Panc1 (cell line): ENCODE measurements at regions of chr11 and their contacts with region 1.

Region 1: GRCh38 chr11:118610804-118611795 is 3.7 kb downstream of the PHLDB1 start:
- DNase-seq: no peak
- ATAC-seq: peak; percentile 76
- H3K4me3 ChIP-seq: peak overlapping the region; percentile 30 to 50
- H3K27ac ChIP-seq: peak overlapping the region; percentile 35; the same call in 1 of the 2 replicates
- H3K4me1 ChIP-seq: peaks cover 11% of the 10 kb centered on the region; the same call in 1 of the 2 replicates
- H3K27me3 ChIP-seq: no peaks in the 10 kb centered on the region
- CTCF ChIP-seq: peak; percentile 99

Region 2: GRCh38 chr11:118592616-118593367 is 18.3 kb before region 1 on chr11:
- CTCF ChIA-PET with region 1: interaction called, 14 read pairs
- POLR2A ChIA-PET with region 1: no interaction called
- in situ Hi-C with region 1: no loop called
- intact Hi-C with region 1: no loop called
- DNase-seq: no peak
- ATAC-seq: no peak
- H3K4me3 ChIP-seq: no peak overlapping the region
- H3K27ac ChIP-seq: no peak overlapping the region
- H3K4me1 ChIP-seq: no peaks in the 10 kb centered on the region
- H3K27me3 ChIP-seq: no peaks in the 10 kb centered on the region
- CTCF ChIP-seq: no peak

Region 3: GRCh38 chr11:118640332-118641154 is 29.4 kb after region 1 on chr11:
- CTCF ChIA-PET with region 1: no interaction called
- POLR2A ChIA-PET with region 1: interaction called, 17 read pairs
- in situ Hi-C with region 1: no loop called
- intact Hi-C with region 1: no loop called
- DNase-seq: no peak
- ATAC-seq: peak; percentile 51; the same call in 1 of the 2 replicates
- H3K4me3 ChIP-seq: no peak overlapping the region
- H3K27ac ChIP-seq: no peak overlapping the region
- H3K4me1 ChIP-seq: no peaks in the 10 kb centered on the region
- H3K27me3 ChIP-seq: no peaks in the 10 kb centered on the region
- CTCF ChIP-seq: no peak

Region 4: DNA sequence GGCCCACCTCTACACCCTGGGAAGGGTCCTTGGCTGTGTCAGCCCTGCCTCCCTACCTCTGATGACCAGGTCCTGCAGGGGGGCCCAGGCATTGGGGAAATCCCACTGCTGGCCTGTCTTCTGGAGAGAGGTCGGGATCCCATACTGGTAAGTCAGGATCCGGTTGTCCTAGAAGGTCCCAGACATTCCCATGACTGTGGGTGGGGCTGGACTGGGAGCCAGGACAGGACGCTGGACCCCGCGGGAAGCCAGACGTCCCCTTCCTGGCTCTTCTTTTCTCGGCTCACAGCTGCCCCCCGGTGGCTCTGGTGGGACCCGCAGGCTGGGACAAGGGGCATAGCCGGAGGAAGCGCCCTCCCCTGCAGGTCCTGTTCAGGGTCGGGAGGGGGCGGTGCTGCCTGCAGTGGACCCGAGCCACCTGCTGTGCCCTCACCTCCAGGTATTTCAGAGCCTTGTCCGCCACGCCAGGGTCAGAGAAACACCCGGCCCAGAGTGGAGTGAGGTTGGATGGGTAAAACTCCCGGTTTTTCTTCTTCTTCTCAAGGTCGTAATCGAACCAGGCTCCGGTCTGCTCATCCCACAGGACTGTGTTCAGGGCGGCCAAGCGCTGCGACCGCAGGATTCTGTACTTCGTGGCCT is 48.3 kb after region 1 on chr11:
- CTCF ChIA-PET with region 1: interaction called, 14 read pairs
- POLR2A ChIA-PET with region 1: no interaction called
- in situ Hi-C with region 1: no loop called
- intact Hi-C with region 1: no loop called
- DNase-seq: peak; percentile 54
- ATAC-seq: peak; percentile 91
- H3K4me3 ChIP-seq: no peak overlapping the region
- H3K27ac ChIP-seq: no peak overlapping the region
- H3K4me1 ChIP-seq: peaks cover 12% of the 10 kb centered on the region
- H3K27me3 ChIP-seq: no peaks in the 10 kb centered on the region
- CTCF ChIP-seq: peak; percentile 99

Region 5: GRCh38 chr11:118691926-118692830 is 81.1 kb after region 1 on chr11:
- CTCF ChIA-PET with region 1: no interaction called
- POLR2A ChIA-PET with region 1: no interaction called
- in situ Hi-C with region 1: no loop called
- intact Hi-C with region 1: no loop called
- DNase-seq: no peak
- ATAC-seq: no peak
- H3K4me3 ChIP-seq: no peak overlapping the region
- H3K27ac ChIP-seq: no peak overlapping the region
- H3K4me1 ChIP-seq: peaks cover 3% of the 10 kb centered on the region
- H3K27me3 ChIP-seq: no peaks in the 10 kb centered on the region
- CTCF ChIP-seq: no peak